ENCODE measurements at regions of chrX and their contacts with region 1.

Region 1: DNA sequence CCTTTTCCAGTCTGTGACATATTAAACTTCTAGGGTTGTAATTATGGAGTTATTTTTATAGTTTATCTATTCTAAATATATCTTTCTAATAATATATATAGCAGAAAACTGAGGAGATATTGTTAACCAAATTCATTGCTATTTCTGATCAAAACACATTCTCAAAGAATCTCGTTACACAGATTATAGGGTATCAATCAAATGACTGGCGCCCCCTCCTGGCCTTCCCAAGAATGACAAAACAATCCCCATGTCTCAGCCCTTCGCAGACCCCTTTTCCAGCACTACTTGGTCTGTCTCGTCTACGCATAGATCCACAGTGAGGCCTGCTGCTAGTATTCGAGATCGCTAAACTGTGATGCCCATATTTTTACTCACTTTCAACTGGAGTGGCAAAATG is 209.3 kb downstream of the GPC3 start:
- DNase-seq: peak; percentile 6 to 27 (median 24)
- H3K4me3 ChIP-seq: no peak overlapping the region
- H3K4me3 Mint-ChIP-seq: no peak overlapping the region
- H3K27ac ChIP-seq: no peak overlapping the region
- H3K27ac Mint-ChIP-seq: no peak overlapping the region
- H3K4me1 ChIP-seq: no peaks in the 10 kb centered on the region
- H3K4me1 Mint-ChIP-seq: no peaks in the 10 kb centered on the region
- H3K27me3 ChIP-seq: no peaks in the 10 kb centered on the region
- H3K27me3 Mint-ChIP-seq: peaks cover 0 to 3% of the 10 kb centered on the region in 2 donors

Region 2: GRCh38 chrX:133698298-133698697 is 77.8 kb before region 1 on chrX:
- CTCF ChIA-PET with region 1: interaction called, 4 read pairs
- POLR2A ChIA-PET with region 1: no interaction called
- intact Hi-C with region 1: loop called (anchors 2 kb)
- DNase-seq: no peak
- H3K4me3 ChIP-seq: no peak overlapping the region
- H3K4me3 Mint-ChIP-seq: no peak overlapping the region
- H3K27ac ChIP-seq: no peak overlapping the region
- H3K27ac Mint-ChIP-seq: no peak overlapping the region
- H3K4me1 ChIP-seq: no peaks in the 10 kb centered on the region
- H3K4me1 Mint-ChIP-seq: no peaks in the 10 kb centered on the region
- H3K27me3 ChIP-seq: no peaks in the 10 kb centered on the region
- H3K27me3 Mint-ChIP-seq: peaks cover 2% of the 10 kb centered on the region in 2 donors

Region 3: GRCh38 chrX:133745349-133745748 is 30.7 kb before region 1 on chrX:
- CTCF ChIA-PET with region 1: interaction called, 4 read pairs
- POLR2A ChIA-PET with region 1: no interaction called
- intact Hi-C with region 1: loop called (anchors 1 kb)
- DNase-seq: peak in 4 of 5 donors; percentile 21 to 39 (median 36)
- H3K4me3 ChIP-seq: no peak overlapping the region
- H3K4me3 Mint-ChIP-seq: peak overlapping the region in 3 of 8 donors; percentile 21 to 46 (median 26)
- H3K27ac ChIP-seq: no peak overlapping the region
- H3K27ac Mint-ChIP-seq: peak overlapping the region in 4 of 7 donors; percentile 18 to 67 (median 36)
- H3K4me1 ChIP-seq: peaks cover 17% of the 10 kb centered on the region
- H3K4me1 Mint-ChIP-seq: peaks cover 13 to 39% (median 32%) of the 10 kb centered on the region in 4 donors
- H3K27me3 ChIP-seq: no peaks in the 10 kb centered on the region
- H3K27me3 Mint-ChIP-seq: no peaks in the 10 kb centered on the region